ENCODE measurements at regions of chr3 and their contacts with region 1.

Region 1: GRCh38 chr3:107522510-107523288 is at the start of gene BBX:
- DNase-seq: peak; percentile 88 to 97 (median 96)
- ATAC-seq: peak; percentile 98
- H3K4me3 ChIP-seq: peak within 1 kb of the TSS; percentile 98
- H3K27ac ChIP-seq: peak within 1 kb of the TSS; percentile 89
- H3K4me1 ChIP-seq: peaks cover 1% of the 10 kb centered on the region
- H3K27me3 ChIP-seq: no peaks in the 10 kb centered on the region
- total RNA-seq, gene BBX: 44.6 to 57.1 (median 50.0) TPM

Region 2: DNA sequence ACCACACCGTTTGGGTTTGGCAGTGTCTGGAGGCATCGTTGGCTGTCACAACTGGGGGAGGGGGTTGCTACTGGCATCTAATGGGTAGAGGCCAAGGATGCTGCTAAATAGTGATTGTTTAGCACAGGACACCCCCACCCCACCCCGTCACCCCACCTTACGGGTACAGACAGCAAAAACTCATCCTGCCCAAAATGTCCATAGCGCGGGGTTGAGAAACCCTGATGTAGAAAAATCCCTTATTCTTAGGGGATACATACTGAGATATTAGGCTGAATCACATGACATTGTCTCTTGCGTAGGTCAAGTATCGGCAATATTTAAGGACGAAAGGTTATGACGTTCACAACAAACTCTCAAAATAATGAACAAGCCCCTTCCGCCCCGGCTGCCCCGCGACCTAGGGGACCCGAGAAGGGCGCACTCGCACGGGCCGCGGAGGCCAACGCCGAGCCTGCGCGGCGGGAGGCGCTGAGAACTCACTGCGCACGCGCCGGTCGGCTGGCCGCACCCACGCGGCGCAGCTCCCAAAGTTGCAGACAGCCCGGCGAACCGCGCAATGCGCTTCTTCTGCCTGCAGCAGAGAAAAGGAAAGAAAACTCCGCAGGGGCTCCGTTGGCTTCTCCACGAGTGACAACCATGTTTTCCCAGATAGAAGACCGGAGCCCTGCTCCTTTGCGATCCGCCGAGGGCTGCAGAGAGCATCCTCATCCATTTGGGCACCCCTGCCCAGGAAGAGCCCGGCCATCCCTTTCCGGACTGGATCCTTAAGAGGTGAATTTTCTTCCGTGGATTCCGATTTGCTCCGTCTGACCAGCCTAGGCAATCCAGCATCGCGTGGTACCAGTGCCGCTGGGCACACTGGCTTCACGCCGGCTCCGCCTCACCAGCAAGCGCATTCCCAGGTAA is 282.3 kb before region 1 on chr3:
- intact Hi-C with region 1: loop called in 1 of 4 experiments (anchors 10 kb)
- DNase-seq: peak; percentile 85 to 93 (median 92)
- ATAC-seq: peak; percentile 97 to 98
- H3K4me3 ChIP-seq: peak overlapping the region; percentile 97
- H3K27ac ChIP-seq: peak overlapping the region; percentile 86
- H3K4me1 ChIP-seq: no peaks in the 10 kb centered on the region
- H3K27me3 ChIP-seq: no peaks in the 10 kb centered on the region

Region 3: GRCh38 chr3:107429320-107430181 is 93.1 kb before region 1 on chr3:
- intact Hi-C with region 1: loop called in 3 of 4 experiments (anchors 5 kb)
- DNase-seq: peak; percentile 79 to 90 (median 86)
- ATAC-seq: peak; percentile 89 to 91
- H3K4me3 ChIP-seq: peak overlapping the region; percentile 61
- H3K27ac ChIP-seq: peak overlapping the region; percentile 85
- H3K4me1 ChIP-seq: peaks cover 2% of the 10 kb centered on the region
- H3K27me3 ChIP-seq: no peaks in the 10 kb centered on the region

Region 4: GRCh38 chr3:107468802-107469201 is 53.9 kb before region 1 on chr3:
- intact Hi-C with region 1: no loop called
- DNase-seq: no peak
- ATAC-seq: no peak
- H3K4me3 ChIP-seq: no peak overlapping the region
- H3K27ac ChIP-seq: no peak overlapping the region
- H3K4me1 ChIP-seq: no peaks in the 10 kb centered on the region
- H3K27me3 ChIP-seq: no peaks in the 10 kb centered on the region

Region 5: GRCh38 chr3:107562969-107563529 is 40.4 kb after region 1 on chr3:
- intact Hi-C with region 1: no loop called
- DNase-seq: peak in 1 of 3 donors; percentile 23
- ATAC-seq: peak; percentile 37 to 64
- H3K4me3 ChIP-seq: no peak overlapping the region
- H3K27ac ChIP-seq: no peak overlapping the region
- H3K4me1 ChIP-seq: no peaks in the 10 kb centered on the region
- H3K27me3 ChIP-seq: no peaks in the 10 kb centered on the region

Measured in right cardiac atrium (tissue), 5 donors.